CD4-positive, alpha-beta T cell (primary cell): ENCODE measurements at regions of chr4 and their contacts with region 1.

Region 1: GRCh38 chr4:142516670-142517526 is 329.2 kb downstream of the INPP4B start:
- DNase-seq: no peak
- ATAC-seq: no peak
- H3K4me3 ChIP-seq: no peak overlapping the region
- H3K4me3 Mint-ChIP-seq: no peak overlapping the region
- H3K27ac ChIP-seq: no peak overlapping the region
- H3K27ac Mint-ChIP-seq: no peak overlapping the region
- H3K4me1 ChIP-seq: no peaks in the 10 kb centered on the region
- H3K4me1 Mint-ChIP-seq: peaks cover 5% of the 10 kb centered on the region
- H3K27me3 ChIP-seq: no peaks in the 10 kb centered on the region
- H3K27me3 Mint-ChIP-seq: no peaks in the 10 kb centered on the region
- CTCF ChIP-seq: no peak

Region 2: DNA sequence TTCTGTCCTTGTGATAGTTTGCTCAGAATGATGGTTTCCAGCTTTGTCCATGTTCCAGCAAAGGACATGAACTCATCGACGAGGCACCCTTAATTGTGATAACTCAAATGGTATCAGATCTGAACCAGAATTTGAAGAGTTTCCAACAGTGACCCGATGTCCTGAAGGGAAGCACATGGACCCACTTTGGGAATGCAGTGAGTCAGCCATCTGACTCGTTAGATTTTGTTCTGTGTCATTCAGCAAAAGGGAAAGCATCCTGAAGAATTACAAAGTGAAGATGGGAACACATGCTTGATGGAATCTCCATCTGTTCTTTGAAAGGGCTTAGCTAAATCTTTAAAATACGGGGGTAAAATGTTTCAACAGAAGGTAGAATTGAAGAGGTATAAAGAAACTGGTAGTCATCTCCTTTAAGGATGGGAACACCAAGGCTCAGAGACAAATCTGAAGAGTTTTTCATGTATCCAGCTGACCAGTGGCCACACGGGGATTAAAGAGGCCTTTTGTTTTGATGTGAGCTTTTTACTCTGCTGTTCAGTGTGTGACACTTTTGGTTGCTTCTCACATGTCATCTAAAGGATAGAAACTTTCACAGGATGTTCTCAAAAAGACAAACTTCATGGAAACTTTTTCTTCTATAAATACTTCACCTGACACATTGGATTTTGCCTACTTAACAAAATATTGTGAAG is 64.6 kb before region 1 on chr4:
- CTCF ChIA-PET with region 1: no interaction called
- POLR2A ChIA-PET with region 1: no interaction called
- intact Hi-C with region 1: loop called in 1 of 2 experiments (anchors 5 kb)
- DNase-seq: no peak
- ATAC-seq: no peak
- H3K4me3 ChIP-seq: no peak overlapping the region
- H3K4me3 Mint-ChIP-seq: no peak overlapping the region
- H3K27ac ChIP-seq: no peak overlapping the region
- H3K27ac Mint-ChIP-seq: no peak overlapping the region
- H3K4me1 ChIP-seq: no peaks in the 10 kb centered on the region
- H3K4me1 Mint-ChIP-seq: peaks cover 7% of the 10 kb centered on the region
- H3K27me3 ChIP-seq: no peaks in the 10 kb centered on the region
- H3K27me3 Mint-ChIP-seq: no peaks in the 10 kb centered on the region
- CTCF ChIP-seq: no peak

Region 3: DNA sequence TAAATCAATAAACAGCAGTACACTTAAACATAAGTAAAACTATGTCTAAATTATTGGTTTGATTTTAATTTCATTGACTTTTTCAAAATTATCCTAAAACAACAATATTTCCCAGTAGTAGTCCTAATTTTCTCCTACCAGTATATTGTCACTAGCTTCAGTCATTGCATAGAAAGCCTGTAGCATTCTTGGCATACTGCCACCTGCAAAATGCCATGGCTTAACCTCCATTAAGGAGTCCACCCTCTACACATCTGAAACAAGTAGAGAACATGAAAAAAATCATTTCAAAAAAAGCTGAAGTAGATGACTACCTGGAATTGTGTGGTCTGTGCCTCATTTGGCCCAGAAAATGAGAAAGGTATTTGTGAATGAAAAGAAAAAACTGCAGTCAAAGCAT is 19.3 kb before region 1 on chr4:
- CTCF ChIA-PET with region 1: no interaction called
- POLR2A ChIA-PET with region 1: no interaction called
- intact Hi-C with region 1: no loop called
- DNase-seq: no peak
- ATAC-seq: no peak
- H3K4me3 ChIP-seq: no peak overlapping the region
- H3K4me3 Mint-ChIP-seq: no peak overlapping the region
- H3K27ac ChIP-seq: no peak overlapping the region
- H3K27ac Mint-ChIP-seq: no peak overlapping the region
- H3K4me1 ChIP-seq: no peaks in the 10 kb centered on the region
- H3K4me1 Mint-ChIP-seq: no peaks in the 10 kb centered on the region
- H3K27me3 ChIP-seq: no peaks in the 10 kb centered on the region
- H3K27me3 Mint-ChIP-seq: no peaks in the 10 kb centered on the region
- CTCF ChIP-seq: no peak